ENCODE measurements at regions of chr14 and their contacts with region 1.

Region 1: GRCh38 chr14:92352158-92352985 is 29.4 kb downstream of the SLC24A4 start:
- H3K4me3 ChIP-seq: no peak overlapping the region
- H3K27ac ChIP-seq: no peak overlapping the region
- H3K4me1 ChIP-seq: peaks cover 5% of the 10 kb centered on the region; the same call in 1 of the 2 replicates
- CTCF ChIP-seq: no peak

Region 2: DNA sequence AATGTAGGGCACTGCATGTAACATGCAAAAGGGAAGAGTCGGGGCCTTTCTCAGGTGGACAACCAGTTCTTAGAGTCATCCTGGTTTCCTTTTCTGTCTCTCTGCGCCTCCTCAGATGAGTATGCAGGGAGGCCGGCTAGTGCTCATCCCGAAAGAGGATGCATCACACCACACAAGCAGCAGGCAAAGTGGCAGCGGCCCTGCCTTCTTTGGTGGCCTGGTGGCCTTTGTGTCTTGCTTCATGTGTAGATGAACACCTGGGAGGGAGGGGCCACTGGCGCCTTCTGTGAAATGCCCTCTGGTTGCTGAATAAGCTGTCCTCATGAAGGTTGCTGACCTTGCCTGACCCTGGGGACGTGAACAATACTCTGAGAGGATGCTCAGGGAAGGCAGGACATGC is 11.4 kb before region 1 on chr14:
- CTCF ChIA-PET with region 1: interaction called, 12 read pairs
- POLR2A ChIA-PET with region 1: interaction called, 3 read pairs
- H3K4me3 ChIP-seq: no peak overlapping the region
- H3K27ac ChIP-seq: no peak overlapping the region
- H3K4me1 ChIP-seq: no peaks in the 10 kb centered on the region
- CTCF ChIP-seq: no peak

Measured in HEK293 (cell line).